ENCODE measurements at regions of chr2 and their contacts with region 1.

Region 1: DNA sequence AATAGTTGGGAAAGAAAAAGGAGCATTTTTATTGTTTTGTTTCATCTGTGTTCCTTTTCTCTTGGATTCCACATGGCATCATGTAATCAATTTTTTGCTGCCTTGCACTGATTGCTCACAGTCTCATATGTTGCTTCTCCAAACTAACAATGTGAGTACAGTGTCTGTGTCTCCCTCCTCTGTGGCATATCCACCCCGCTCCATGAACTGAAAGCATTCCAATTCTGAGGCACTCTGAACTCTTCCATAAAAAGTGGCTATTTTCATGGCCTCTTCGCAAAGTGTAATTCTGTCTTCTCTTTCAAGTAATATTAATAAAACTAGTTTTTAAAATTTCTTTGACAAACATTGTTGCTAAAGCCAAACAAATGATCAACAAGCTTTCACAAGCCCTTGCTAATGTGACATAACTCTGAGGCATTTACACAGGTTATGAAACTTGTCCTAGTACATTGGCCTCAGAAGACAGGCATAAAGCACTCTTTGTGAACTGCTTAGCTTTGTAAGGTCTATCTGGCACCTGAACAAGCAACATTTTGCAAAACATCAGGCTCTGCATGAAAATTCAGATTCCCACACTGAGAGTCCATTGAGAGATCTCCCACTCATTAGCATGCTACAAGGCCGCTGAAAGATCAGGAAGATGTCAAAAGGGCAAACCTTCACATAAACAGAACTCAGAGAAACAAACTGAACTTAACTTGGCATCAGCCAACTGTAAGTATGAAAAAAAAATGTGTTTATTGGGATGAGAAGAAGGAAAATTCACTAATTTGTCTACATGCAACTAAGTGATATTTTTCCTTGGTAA is 33.0 kb downstream of the GPR75 start:
- DNase-seq: no peak
- H3K4me3 ChIP-seq: no peak overlapping the region
- H3K27ac ChIP-seq: no peak overlapping the region
- H3K4me1 ChIP-seq: no peaks in the 10 kb centered on the region
- CTCF ChIP-seq: no peak

Region 2: DNA sequence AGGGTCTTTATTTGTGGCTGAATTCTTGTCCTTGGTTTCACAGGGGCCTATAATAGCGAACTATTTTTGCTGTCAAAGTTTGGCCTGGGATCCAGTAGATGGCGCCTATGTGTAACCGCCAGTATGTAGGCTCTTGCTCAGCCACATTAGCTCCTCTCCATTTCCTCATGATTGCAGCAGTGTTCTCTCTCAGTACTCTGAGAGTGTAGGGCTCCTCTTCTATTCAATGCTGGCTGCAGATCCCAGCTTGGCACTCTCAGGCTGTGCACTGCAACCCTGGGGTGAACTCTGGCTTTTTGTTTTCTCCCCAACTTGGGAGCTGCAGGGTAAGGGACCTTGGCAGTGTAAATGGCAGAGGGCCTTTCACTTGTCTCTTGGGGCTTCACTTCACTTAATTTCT is 403.8 kb before region 1 on chr2:
- CTCF ChIA-PET with region 1: no interaction called
- POLR2A ChIA-PET with region 1: no interaction called
- intact Hi-C with region 1: loop called (anchors 10 kb)
- DNase-seq: peak; percentile 63
- H3K4me3 ChIP-seq: no peak overlapping the region
- H3K27ac ChIP-seq: no peak overlapping the region
- H3K4me1 ChIP-seq: no peaks in the 10 kb centered on the region
- CTCF ChIP-seq: peak; percentile 81

Measured in OCI-LY7 (cell line).